Activated CD4-positive, alpha-beta memory T cell treated with anti-CD3 and anti-CD28 coated beads for 36 hours (primary cell): ENCODE measurements at regions of chr20 and their contacts with region 1.

Region 1: GRCh38 chr20:34312544-34313217 is 9.5 kb upstream of the AHCY start:
- DNase-seq: peak; percentile 94
- H3K4me3 Mint-ChIP-seq: no peak overlapping the region
- H3K27ac Mint-ChIP-seq: no peak overlapping the region
- H3K4me1 Mint-ChIP-seq: peaks cover 6% of the 10 kb centered on the region
- H3K27me3 Mint-ChIP-seq: peaks cover 19% of the 10 kb centered on the region

Region 2: DNA sequence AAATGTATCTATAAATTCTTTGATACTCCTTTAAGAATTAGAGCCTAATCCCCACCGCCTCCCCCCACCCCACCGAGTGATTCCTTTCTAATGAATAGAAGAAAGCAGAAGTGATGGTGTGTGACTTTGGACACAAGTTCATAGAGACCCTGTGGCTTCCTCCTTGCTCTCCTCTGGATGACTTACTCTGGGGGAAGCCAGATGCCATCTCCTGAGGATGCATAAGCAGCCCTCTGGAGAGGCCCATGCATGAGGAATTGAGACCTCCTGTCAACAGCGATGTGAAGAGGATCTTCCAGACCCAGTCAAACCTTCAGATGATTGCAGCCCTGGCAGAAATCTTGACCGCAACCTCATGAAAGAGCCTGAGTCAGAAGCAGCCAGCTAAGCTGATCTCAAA is 30.6 kb before region 1 on chr20:
- CTCF ChIA-PET with region 1: no interaction called
- POLR2A ChIA-PET with region 1: no interaction called
- intact Hi-C with region 1: no loop called
- DNase-seq: no peak
- H3K4me3 Mint-ChIP-seq: no peak overlapping the region
- H3K27ac Mint-ChIP-seq: no peak overlapping the region
- H3K4me1 Mint-ChIP-seq: no peaks in the 10 kb centered on the region
- H3K27me3 Mint-ChIP-seq: no peaks in the 10 kb centered on the region

Region 3: DNA sequence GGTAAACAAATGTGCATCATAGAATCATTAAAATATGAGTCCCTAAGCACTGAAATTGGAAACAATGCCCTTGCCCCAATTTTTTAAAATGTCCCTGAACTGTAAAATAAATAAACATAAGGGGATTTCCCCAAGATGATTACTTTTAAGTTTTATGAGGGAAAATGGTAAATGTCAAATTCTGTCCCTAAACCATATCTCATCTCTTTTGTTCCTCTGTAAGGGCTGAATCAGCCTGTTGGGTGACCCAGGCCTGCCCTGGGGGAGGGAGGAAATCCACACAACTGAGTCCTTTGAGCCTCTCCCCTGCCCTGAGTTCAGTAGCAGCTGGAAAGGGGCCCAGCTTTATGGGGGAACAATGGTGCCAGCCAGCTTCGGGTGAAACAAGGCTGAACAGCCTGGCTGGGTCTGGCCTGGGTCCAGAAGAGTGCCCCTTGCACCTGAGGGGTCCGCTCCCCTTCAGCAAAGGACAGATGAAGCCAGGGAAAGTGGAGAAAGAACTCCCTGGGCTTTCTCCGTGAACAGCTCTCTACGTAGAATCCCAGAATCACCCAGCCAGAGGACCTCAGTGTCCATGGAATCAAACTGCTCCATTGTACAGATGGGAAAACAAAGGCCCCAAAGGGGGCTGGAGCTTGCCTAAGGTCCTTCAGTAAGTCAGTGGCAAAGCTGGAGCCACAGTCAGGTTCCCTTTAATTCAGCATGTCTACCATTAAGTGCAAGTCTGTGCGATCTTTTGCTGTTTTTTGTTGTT is 22.1 kb after region 1 on chr20:
- CTCF ChIA-PET with region 1: interaction called, 29 read pairs
- POLR2A ChIA-PET with region 1: no interaction called
- intact Hi-C with region 1: no loop called
- DNase-seq: no peak
- H3K4me3 Mint-ChIP-seq: no peak overlapping the region
- H3K27ac Mint-ChIP-seq: no peak overlapping the region
- H3K4me1 Mint-ChIP-seq: no peaks in the 10 kb centered on the region
- H3K27me3 Mint-ChIP-seq: no peaks in the 10 kb centered on the region

Region 4: GRCh38 chr20:34421766-34422466 is 109.2 kb after region 1 on chr20:
- CTCF ChIA-PET with region 1: interaction called, 23 read pairs
- POLR2A ChIA-PET with region 1: no interaction called
- intact Hi-C with region 1: no loop called
- DNase-seq: no peak
- H3K4me3 Mint-ChIP-seq: no peak overlapping the region
- H3K27ac Mint-ChIP-seq: no peak overlapping the region
- H3K4me1 Mint-ChIP-seq: peaks cover 11% of the 10 kb centered on the region
- H3K27me3 Mint-ChIP-seq: no peaks in the 10 kb centered on the region

Region 5: DNA sequence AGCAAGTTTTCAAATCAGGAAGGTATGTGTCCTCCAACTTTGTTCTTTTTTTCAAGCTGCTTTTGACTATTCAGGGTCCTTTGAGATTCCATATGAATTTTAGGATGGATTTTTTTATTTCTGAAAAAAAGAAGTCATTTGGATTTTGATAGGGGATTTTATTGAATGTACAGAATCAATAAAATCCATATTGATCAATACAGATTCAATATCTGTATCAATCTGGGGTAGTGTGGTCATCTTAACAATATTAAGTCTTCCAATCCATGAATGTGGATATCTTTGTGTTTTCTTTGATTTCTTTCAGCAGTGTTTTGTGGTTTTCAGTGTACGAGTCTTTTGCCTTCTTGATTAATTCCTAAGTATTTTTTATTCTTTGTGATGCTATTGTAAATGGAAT is 152.6 kb after region 1 on chr20:
- CTCF ChIA-PET with region 1: interaction called, 17 read pairs
- POLR2A ChIA-PET with region 1: no interaction called
- intact Hi-C with region 1: no loop called
- DNase-seq: no peak
- H3K4me3 Mint-ChIP-seq: no peak overlapping the region
- H3K27ac Mint-ChIP-seq: no peak overlapping the region
- H3K4me1 Mint-ChIP-seq: no peaks in the 10 kb centered on the region
- H3K27me3 Mint-ChIP-seq: no peaks in the 10 kb centered on the region

Region 6: GRCh38 chr20:34506480-34506879 is 193.8 kb after region 1 on chr20:
- CTCF ChIA-PET with region 1: interaction called, 15 read pairs
- POLR2A ChIA-PET with region 1: no interaction called
- intact Hi-C with region 1: no loop called
- DNase-seq: no peak
- H3K4me3 Mint-ChIP-seq: no peak overlapping the region
- H3K27ac Mint-ChIP-seq: no peak overlapping the region
- H3K4me1 Mint-ChIP-seq: no peaks in the 10 kb centered on the region
- H3K27me3 Mint-ChIP-seq: no peaks in the 10 kb centered on the region

Region 7: DNA sequence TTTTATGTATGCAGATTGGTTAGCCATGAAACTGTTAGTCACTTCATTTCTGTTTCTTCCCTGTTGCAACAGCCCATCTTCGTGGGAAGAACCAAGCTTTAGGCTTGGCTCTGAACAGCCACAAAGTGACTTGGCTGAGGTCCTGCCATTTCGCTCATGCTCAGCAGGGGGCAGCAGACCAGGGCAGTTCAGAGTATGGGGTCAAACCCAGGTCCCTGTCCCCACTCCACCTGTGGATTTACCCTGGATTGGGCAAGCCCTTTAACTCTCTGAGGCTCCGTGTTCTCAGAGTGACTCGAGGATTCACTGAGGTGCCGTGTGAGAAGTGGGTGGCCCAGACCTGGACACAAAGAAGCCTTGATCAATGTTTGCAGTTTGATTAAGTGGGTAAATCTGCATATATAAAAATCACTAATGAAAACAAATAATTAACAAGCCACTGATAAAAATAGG is 226.0 kb after region 1 on chr20:
- CTCF ChIA-PET with region 1: interaction called, 15 read pairs
- POLR2A ChIA-PET with region 1: no interaction called
- intact Hi-C with region 1: no loop called
- DNase-seq: peak; percentile 74
- H3K4me3 Mint-ChIP-seq: no peak overlapping the region
- H3K27ac Mint-ChIP-seq: no peak overlapping the region
- H3K4me1 Mint-ChIP-seq: peaks cover 34% of the 10 kb centered on the region
- H3K27me3 Mint-ChIP-seq: no peaks in the 10 kb centered on the region